PC-9 (cell line): ENCODE measurements at regions of chr11 and their contacts with region 1.

Region 1: DNA sequence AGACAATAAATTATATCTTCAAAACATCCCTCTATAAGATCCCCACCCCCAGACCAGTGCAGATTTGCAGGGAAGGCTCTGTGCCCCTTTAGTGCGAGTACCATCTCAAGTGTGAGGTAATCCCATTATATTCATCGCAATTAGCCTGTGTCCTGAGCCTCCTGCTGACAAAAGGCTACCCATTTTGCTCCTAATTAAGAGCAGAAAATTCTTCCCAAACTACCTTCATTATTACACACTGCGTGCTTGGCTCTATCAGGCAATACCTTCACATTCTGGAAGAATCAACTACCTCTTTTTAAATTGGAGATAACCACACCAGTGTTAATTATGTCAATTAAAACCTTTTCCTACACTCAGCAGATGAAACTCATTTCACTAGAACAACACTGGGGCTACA is 1133.4 kb upstream of the CCDC90B start:
- DNase-seq: no peak
- H3K4me3 ChIP-seq: no peak overlapping the region
- H3K27ac ChIP-seq: no peak overlapping the region
- H3K4me1 ChIP-seq: no peaks in the 10 kb centered on the region
- H3K27me3 ChIP-seq: no peaks in the 10 kb centered on the region
- CTCF ChIP-seq: no peak

Region 2: DNA sequence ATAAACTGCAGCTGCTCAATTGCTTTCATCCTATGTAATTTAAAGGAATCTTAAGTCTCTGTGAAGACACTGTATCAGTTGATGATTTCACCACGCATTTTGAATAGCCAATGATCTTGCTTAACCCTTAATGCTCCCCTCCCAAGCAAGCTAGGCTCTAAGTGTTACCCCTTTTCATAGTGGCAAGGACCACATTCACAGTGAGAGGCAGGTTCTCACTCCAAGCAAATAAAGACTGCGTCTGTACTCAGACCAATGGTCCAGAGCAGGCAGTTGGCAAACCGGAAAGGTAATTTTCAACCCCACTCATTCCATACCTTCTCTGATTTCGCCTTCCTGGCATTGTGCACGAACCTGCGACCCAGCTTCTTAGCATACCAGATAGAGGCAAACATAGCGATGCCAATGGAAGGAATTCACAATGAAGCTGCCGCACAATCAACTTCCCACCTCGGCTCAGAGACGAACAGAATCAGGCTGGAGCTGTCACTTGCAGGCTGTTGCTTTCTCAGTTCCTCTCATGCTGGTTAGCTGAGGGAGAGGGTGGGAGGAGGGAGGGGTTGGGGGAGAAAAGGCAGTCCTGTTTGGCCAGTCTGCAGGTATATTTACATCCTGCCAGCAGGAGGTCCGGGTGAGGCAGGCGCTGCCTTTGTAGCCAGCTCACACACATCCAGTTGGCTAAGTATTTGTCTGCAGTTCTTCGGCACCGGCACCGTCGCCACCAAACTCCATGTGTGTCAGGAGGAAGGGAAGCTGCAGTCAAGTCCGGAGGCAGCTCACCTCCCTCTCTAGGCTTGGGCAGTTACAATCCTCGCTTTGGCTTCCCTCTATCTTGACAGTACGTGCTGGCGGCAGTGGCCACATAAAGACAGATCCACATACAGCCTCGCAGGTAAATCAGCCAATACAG is 17.7 kb after region 1 on chr11:
- CTCF ChIA-PET with region 1: no interaction called
- POLR2A ChIA-PET with region 1: interaction called, 14 read pairs
- intact Hi-C with region 1: no loop called
- DNase-seq: peak in 1 of 2 experiments; percentile 39
- H3K4me3 ChIP-seq: peak overlapping the region; percentile 41; the same call in 1 of the 2 replicates
- H3K27ac ChIP-seq: no peak overlapping the region
- H3K4me1 ChIP-seq: no peaks in the 10 kb centered on the region
- H3K27me3 ChIP-seq: no peaks in the 10 kb centered on the region
- CTCF ChIP-seq: no peak